ENCODE measurements at regions of chr14 and their contacts with region 1.

Region 1: DNA sequence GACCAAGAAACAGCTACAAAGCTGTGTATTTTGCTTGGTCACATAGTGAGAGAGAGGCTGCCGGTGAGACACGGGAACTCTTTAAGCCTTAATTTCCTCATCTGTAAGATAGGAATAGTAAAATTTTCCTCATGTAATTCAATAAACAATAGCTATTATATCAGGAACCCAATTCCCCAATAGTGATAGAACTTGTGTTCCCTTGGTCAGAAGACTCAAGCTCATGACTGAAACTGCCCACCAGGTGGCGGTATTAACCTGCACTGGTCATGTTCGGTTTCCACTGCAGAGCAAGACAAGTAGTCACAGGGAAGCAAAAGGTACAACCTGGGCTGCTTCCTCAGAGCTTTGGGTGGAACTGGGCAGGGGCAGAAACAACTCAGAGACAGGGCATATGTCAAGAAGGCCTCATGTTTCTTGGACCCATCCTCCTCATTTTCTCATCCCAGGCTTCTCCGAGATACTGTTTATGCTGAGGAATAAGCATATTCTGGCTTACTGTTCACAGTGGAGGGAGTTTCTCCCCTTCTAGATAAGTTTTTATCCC is 4.2 kb upstream of the AJUBA start:
- H3K4me3 ChIP-seq: no peak overlapping the region
- H3K27ac ChIP-seq: no peak overlapping the region
- H3K4me1 ChIP-seq: peaks cover 4% of the 10 kb centered on the region
- CTCF ChIP-seq: peak; percentile 77; the same call in 1 of the 2 replicates

Region 2: DNA sequence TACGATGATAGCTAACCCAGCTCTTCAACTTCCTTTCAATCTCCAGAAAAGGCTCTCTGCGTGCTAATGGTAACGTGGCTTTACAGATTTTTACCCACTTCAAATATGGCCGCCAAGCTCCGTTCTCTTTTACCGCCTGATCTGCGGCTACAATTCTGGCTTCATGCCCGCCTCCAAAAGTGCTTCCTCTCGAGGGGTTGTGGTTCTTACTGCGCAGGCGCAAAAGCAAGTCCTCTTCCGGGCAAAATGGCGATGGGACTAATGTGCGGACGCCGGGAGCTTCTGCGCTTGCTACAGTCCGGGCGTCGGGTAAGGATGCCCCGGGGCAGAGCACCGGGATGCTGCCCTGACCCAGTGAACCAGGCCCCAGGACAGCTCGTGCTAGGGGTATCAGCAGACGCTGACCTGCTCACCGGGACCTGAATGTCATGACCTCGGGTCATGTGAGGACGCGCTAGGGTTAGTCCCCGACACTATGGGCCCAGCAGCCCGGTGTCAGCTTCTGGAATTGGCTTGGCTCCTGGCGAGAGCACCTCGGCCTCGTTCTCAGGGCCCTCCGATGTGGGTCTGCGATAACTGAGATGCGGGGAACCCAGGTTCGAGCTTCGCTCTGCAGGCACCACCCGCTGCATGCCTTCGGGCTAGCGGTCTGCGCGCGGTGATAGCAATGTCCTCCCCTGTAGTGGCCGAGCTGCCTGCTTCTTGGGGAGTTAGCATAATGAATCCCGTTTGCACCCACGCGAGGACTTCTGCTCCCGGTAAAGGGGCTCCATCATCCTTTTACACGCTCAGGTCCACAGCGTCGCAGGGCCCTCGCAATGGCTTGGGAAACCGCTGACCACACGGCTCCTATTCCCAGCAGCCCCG is 219.9 kb before region 1 on chr14 and contains the start of gene OXA1L:
- CTCF ChIA-PET with region 1: no interaction called
- POLR2A ChIA-PET with region 1: no interaction called
- H3K4me3 ChIP-seq: peak within 1 kb of the TSS; percentile 94
- H3K27ac ChIP-seq: peak within 1 kb of the TSS; percentile 58
- H3K4me1 ChIP-seq: no peaks in the 10 kb centered on the region; the same call in 1 of the 2 replicates
- CTCF ChIP-seq: no peak

Region 3: GRCh38 chr14:22822571-22823098 is 163.9 kb before region 1 on chr14:
- CTCF ChIA-PET with region 1: interaction called, 10 read pairs
- POLR2A ChIA-PET with region 1: no interaction called
- H3K4me3 ChIP-seq: peak overlapping the region; percentile 15
- H3K27ac ChIP-seq: no peak overlapping the region
- H3K4me1 ChIP-seq: peaks cover 2% of the 10 kb centered on the region; the same call in 1 of the 2 replicates
- CTCF ChIP-seq: peak; percentile 68

Region 4: DNA sequence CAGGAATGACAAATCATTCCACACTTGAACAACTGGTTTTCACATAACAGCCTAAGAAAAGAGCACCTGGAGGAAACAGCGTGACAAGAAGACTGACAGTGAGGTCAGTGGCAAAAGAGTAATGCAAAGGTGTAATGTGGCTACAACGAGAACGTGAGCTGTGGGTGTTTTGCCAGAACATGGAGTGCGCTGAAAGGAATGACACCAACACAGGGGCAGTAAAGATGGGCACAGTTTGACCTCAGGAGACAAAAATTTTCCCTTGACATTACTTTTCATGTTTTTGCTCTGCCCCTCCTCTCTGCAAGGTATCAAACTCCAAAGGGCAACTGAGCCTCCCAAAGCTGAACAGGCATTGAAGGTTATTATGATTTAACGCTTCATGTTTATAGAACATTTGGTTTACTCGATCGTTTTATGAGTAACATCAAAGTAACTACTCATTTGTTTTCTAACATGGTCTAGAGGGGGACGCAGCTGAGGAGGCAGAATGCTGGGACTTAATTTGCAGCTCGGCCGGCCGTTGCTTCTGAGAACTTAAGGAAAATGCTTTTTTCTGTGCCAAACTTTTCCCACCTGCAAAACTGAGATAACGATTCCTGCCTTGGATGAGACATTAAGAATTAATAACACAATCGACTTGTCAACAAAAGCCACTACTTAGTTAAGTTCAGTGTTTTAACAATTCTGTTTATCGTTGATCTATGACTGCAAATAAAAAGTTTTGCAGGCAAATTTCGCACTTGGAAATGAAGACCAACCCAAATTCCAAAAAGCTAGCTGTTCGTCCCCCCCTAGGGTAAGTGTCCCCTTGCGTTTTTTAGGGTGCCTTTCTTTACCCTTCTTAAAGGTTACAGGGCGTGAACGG is 30.6 kb before region 1 on chr14:
- CTCF ChIA-PET with region 1: interaction called, 7 read pairs
- POLR2A ChIA-PET with region 1: interaction called, 20 read pairs
- H3K4me3 ChIP-seq: peak overlapping the region; percentile 75
- H3K27ac ChIP-seq: peak overlapping the region; percentile 76; the same call in 1 of the 2 replicates
- H3K4me1 ChIP-seq: no peaks in the 10 kb centered on the region
- CTCF ChIP-seq: no peak

Region 5: DNA sequence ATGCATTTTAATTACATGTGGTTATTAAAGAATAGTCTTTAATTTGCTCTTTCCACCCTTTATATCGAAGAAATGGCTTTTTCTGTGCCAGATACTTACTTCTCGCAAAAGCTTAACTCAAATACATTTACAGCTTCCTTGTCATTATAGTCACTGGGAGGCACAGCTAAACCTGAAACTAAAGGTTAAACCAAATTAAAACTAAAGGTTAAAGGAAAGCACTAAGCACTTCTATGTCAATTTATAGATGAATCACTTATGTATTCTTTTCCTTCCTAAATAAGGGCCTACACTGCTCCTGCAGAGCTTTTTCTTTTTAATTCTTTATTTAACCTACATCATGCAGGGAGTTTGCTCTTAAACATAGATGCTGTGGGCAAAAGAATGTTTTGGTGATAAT is 14.3 kb after region 1 on chr14:
- CTCF ChIA-PET with region 1: interaction called, 96 read pairs
- POLR2A ChIA-PET with region 1: interaction called, 28 read pairs
- H3K4me3 ChIP-seq: no peak overlapping the region
- H3K27ac ChIP-seq: no peak overlapping the region
- H3K4me1 ChIP-seq: peaks cover 7% of the 10 kb centered on the region
- CTCF ChIP-seq: no peak

Region 6: GRCh38 chr14:23028799-23029198 is 42.2 kb after region 1 on chr14:
- CTCF ChIA-PET with region 1: interaction called, 15 read pairs
- POLR2A ChIA-PET with region 1: interaction called, 6 read pairs
- H3K4me3 ChIP-seq: no peak overlapping the region
- H3K27ac ChIP-seq: no peak overlapping the region
- H3K4me1 ChIP-seq: peaks cover 4% of the 10 kb centered on the region; the same call in 1 of the 2 replicates
- CTCF ChIP-seq: no peak

Region 7: DNA sequence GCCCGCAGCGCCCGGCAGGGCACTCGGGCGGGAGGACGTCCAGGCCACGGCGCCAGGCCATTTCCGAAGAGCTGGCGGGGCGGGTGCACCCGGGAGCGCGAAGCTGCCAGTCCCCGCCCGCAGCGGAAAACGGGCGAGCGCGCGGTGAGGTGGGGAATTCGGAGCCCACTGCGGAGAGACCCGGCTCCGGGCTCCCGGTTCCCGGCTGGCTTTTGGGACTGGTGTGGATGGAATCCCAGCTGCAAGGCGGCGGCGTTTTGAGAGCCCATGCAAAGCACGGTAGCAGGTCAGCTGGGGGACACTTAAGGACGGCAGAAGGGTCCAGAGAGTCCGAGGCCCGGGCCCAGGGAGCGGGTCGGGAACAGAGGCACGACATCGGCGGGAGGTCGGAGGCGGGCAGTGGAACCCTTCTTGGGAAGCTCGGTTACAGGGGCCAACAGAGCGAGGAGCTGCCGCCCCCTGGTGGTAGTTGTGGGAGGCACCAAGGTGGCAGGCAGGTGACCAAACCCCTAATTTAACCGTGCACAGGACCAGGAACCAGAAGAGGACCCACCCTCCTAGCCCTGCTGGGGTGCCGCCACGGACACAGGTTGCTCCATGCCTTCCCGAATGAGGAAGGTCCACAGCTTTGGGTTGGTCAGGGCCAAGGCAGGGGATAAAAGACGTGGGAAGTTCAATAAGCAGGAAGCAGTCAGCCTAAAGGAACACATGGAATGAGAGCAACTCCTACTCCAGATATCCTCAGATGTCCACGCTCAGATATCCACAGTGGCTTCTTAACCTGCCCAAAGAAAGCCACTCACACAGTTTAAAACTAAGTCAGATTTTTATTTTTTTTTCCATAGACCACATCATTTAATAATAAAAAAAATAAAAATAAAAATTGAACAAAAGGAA is 71.4 kb after region 1 on chr14:
- CTCF ChIA-PET with region 1: interaction called, 469 read pairs
- POLR2A ChIA-PET with region 1: interaction called, 33 read pairs
- H3K4me3 ChIP-seq: peak overlapping the region; percentile 65
- H3K27ac ChIP-seq: peak overlapping the region; percentile 73
- H3K4me1 ChIP-seq: peaks cover 4% of the 10 kb centered on the region; the same call in 1 of the 2 replicates
- CTCF ChIP-seq: peak; percentile 96

Region 8: DNA sequence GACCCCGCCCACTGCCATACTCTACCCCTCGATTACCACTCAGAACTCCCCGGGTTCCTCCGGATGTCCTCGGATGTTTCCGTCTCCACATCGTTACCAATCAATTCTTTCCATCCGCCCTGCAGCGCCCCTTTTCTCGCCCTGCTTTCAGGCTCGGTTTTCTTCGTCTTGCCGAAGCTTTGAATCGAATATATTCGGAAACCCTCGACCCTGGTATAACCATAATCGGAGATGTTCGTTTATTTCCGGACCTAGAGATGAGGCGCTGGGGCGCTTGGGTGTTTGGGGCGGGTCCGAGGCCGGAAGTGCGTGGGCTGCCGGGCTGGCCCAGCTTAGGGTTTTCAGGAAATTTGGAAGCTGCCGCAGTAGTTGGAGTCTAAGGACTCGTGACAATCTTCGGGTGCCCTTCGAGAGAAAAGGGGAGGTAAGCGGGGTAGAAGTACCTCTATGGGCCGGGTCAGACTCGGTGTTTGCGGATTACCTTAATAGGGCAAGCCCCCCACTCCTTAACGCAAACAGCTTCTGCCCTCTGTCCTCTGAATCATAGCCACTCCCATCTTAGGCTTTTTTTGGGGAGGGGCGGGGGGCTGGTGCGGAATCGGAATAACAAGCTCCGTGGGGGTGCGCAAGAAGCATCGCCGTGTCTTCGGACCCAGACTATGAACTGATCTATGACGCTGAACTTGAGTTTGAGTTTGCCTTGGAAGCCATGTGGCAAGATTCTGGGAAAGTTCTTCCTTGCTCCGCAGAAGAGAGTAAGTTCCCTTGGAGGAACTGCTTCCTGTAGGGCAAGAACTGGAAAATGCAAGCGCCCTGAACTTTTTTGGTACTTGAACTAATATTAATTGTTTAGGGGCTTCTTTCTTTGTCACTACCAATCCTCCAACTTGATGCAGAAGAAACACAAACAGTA is 108.9 kb after region 1 on chr14 and contains the start of gene C14orf119:
- CTCF ChIA-PET with region 1: interaction called, 4 read pairs
- POLR2A ChIA-PET with region 1: interaction called, 16 read pairs
- H3K4me3 ChIP-seq: peak within 1 kb of the TSS; percentile 97
- H3K27ac ChIP-seq: peak within 1 kb of the TSS; percentile 92
- H3K4me1 ChIP-seq: peaks cover 10% of the 10 kb centered on the region; the same call in 1 of the 2 replicates
- CTCF ChIP-seq: no peak